Astrocyte of the cerebellum (primary cell): ENCODE measurements at regions of chr3 and their contacts with region 1.

Region 1: DNA sequence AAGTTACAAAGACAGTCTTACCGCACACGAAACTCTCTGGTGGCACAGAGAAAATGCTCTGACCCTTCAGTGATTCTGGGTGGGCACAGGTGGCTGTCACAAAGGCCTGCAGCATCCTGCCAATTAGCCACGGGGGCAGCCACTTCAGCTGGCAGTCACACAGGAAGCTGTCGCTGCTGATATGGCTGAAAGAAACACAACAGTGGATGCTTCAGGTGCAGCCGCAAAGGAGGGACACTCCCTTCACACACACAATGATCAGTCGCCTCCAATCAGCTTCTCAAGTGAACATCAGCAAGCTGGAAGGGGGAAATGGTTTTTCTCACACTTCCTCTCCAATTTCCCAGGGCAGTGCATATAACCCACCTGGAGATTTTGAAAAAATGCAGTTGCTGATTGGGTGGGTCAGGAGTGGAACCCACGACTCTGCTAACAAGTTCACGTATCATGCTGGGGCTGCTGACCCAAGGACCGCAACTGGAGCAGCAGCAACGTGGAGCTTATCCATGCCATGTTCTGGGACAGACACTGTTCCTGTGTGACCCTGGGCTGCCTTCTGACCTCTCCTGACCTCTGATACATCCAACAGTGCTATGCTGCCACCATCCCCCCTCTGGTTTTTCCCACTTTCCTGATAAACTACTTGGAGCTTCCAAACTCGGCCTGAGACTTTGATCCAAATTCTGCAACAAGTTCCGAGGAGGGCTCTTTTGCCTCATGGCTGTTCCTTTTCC is 106.6 kb downstream of the LRIG1 start:
- DNase-seq: no peak
- H3K4me3 ChIP-seq: no peak overlapping the region
- CTCF ChIP-seq: no peak

Region 2: DNA sequence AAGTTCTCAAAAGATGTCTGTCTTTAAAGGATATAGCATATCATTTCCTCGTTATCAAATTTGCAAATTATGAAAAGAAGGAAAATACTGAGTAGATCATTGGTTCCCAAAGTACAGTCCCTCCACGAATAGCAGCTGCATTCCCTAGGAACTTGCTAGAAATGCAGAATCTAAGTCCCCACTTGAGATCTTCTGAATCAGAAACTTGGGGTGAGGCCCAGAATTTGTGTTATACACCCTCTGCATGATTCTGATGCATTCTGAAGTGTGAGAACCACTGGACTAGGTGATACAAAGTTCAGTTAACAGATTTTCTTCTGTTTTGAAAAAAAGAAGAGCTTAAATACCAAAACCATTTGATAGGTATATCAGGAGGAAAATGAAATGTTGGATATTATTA is 96.3 kb before region 1 on chr3:
- in situ Hi-C with region 1: loop called (anchors 5 kb)
- DNase-seq: peak; percentile 65
- H3K4me3 ChIP-seq: no peak overlapping the region
- CTCF ChIP-seq: no peak

Region 3: GRCh38 chr3:66485291-66485968 is 91.2 kb after region 1 on chr3:
- in situ Hi-C with region 1: loop called (anchors 5 kb)
- DNase-seq: no peak
- H3K4me3 ChIP-seq: no peak overlapping the region
- CTCF ChIP-seq: no peak